MCF 10A (cell line): ENCODE measurements at regions of chr2 and their contacts with region 1.

Region 1: DNA sequence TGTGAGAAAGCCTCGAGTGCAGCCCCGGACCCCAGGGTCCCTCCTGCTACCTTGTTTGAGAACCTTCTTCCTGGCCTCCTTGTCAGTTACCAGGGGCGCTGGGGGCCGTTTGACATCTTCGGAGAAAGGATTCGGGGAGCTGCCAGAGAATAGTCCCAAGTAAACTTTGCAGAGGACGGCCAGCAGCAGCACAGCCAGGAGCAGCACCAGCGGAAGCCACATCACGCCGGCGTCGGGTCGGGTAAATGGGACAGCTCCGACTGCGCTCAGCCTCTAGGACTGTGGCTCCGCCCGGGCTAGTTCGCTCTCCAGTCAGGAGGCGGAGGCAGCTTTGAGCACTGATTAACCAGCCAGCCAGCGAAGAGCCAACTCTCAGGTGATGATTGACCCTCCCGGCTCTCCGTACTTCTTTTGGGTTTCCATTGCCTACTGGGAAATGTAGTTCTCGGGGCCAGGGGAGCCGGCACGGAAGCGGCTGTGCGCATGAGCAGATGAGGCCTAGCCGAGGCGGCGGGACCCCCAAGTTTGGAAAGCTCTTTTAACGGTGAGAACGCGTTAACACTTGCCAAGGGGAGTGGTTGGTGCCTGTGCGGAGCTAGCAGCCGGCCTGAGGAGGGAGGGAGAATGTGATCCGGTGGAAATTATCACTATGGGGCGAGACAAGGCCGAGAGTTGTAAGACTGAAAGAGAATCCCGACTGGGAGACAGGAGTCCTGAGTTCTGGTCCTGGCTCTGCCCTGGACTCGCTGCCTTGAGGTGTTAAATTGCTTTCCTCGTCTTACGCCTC is at the starts of genes ELMOD3 and RETSAT:
- DNase-seq: peak; percentile 100
- H3K4me3 Mint-ChIP-seq: peak within 1 kb of the TSS; percentile 97
- H3K27ac Mint-ChIP-seq: peak within 1 kb of the TSS; percentile 98
- H3K4me1 Mint-ChIP-seq: peaks cover 10% of the 10 kb centered on the region
- H3K27me3 Mint-ChIP-seq: no peaks in the 10 kb centered on the region
- CTCF ChIP-seq: no peak
- total RNA-seq, gene ELMOD3: 16.2 and 16.7 TPM in 2 replicates
- total RNA-seq, gene RETSAT: 59.2 and 60.4 TPM in 2 replicates

Region 2: DNA sequence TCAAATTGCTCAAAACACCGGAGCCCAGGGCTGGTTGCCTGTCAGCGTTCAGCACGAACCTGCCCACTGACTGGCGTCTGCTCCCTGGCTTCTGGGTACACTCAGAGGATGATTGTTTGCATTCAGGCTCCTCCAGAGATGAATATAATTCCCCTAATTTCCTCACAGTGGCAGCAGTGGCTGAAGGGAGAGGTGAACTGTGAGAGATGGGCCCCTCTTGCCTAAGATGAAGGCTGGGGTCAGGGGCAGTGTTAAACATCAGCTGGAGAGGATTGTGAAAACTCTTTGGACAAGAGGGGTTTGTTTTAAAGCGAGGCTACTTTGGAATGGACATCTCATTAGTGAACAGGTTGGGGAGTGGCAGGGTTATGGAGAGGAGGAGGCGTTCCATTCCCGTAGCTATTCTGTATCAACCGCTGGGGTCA is 190.3 kb before region 1 on chr2:
- CTCF ChIA-PET with region 1: no interaction called
- POLR2A ChIA-PET with region 1: no interaction called
- intact Hi-C with region 1: no loop called
- DNase-seq: no peak
- H3K4me3 Mint-ChIP-seq: no peak overlapping the region
- H3K27ac Mint-ChIP-seq: no peak overlapping the region
- H3K4me1 Mint-ChIP-seq: no peaks in the 10 kb centered on the region
- H3K27me3 Mint-ChIP-seq: no peaks in the 10 kb centered on the region
- CTCF ChIP-seq: no peak

Region 3: DNA sequence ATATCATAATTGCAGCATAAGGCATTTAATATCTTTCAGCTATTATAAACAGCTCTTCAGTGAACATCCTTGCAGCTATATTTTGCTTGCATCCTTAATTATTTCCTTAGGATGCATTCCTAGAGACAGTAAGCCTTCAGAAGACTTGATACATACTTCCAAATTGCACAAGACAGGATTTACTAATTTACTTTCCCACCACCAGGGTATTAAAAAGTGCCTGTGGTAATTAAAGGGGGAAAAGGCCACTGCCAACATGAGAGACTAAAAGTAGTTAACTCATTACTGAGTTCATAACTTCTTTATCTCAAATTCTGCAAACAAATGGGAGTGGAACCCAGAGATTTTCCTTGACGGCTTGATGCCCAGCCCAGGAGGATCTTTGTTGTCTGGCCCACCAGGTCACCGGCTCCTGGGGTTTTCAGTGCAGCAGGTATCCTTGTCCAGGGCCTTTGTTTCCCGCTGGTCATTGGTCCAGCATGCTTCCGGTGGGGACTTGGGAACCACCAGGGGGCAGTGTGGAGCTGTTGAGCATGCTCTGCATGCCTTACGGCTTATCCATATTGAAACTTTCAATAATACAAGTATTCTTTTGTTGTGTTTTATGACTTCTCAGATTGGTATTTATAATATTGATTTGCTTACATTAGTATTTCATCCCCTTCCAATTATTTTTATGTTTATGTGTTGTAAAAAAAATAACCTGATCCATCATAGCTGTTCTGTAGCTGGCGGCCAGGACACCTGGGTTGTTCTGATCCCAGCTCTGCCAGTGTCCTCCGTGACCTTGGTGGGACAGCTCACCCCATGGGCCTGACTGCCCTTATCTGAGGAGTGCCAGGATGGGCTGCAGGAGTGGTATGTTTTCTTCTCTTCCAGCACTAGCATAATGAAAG is 88.1 kb before region 1 on chr2:
- CTCF ChIA-PET with region 1: no interaction called
- POLR2A ChIA-PET with region 1: no interaction called
- intact Hi-C with region 1: no loop called
- DNase-seq: peak; percentile 74
- H3K4me3 Mint-ChIP-seq: no peak overlapping the region
- H3K27ac Mint-ChIP-seq: no peak overlapping the region
- H3K4me1 Mint-ChIP-seq: no peaks in the 10 kb centered on the region
- H3K27me3 Mint-ChIP-seq: no peaks in the 10 kb centered on the region
- CTCF ChIP-seq: peak; percentile 92

Region 4: DNA sequence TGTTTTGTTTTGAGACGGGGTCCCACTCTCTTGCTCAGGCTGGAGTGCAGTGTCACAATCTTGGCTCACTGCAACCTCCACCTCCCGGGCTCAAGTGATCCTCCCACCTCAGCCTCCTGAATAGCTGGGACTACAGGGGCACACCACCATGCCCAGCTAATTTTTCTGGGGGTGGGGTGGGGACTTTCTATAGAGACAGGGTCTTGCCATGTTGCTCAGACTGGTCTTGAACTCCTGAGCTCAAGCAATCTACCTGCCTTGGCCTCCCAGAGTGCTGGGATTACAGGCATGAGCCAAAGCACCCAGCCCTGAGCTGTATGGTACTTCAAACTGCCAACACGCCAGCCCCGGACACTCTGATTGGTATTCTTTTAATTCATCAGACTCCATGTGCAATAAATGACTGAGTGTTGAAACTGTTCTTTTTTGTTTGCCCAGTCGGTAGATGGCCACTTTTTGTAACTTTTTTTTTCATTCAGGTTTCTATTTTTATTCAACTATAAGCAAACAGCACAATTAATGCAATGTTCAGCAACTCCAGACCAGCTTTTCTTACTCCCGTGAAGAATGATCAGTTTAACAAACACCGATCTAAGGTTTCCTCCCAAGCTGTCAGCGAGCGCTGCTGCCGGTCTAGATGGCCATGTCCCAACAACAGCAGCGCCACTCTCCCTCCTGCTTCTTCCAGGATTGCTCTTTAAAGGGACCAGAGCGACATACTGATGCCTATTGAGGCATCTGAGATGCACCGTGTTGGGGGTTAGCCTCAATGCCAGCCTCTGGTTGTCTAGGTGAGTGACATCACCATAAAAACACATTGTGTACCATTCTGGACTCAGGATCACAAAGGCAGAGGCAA is 14.2 kb before region 1 on chr2:
- CTCF ChIA-PET with region 1: interaction called, 3 read pairs
- POLR2A ChIA-PET with region 1: interaction called, 27 read pairs
- intact Hi-C with region 1: no loop called
- DNase-seq: no peak
- H3K4me3 Mint-ChIP-seq: no peak overlapping the region
- H3K27ac Mint-ChIP-seq: no peak overlapping the region
- H3K4me1 Mint-ChIP-seq: peaks cover 5% of the 10 kb centered on the region
- H3K27me3 Mint-ChIP-seq: peaks cover 19% of the 10 kb centered on the region
- CTCF ChIP-seq: no peak

Region 5: GRCh38 chr2:85409845-85410583 is 55.5 kb after region 1 on chr2 and contains the start of gene CAPG:
- CTCF ChIA-PET with region 1: interaction called, 3 read pairs
- POLR2A ChIA-PET with region 1: interaction called, 40 read pairs
- intact Hi-C with region 1: loop called (anchors 5 kb)
- DNase-seq: peak; percentile 73
- H3K4me3 Mint-ChIP-seq: peak within 1 kb of the TSS; percentile 70
- H3K27ac Mint-ChIP-seq: peak within 1 kb of the TSS; percentile 83
- H3K4me1 Mint-ChIP-seq: peaks cover 34% of the 10 kb centered on the region
- H3K27me3 Mint-ChIP-seq: no peaks in the 10 kb centered on the region
- CTCF ChIP-seq: no peak
- total RNA-seq, gene CAPG: 173 and 188 TPM in 2 replicates

Region 6: GRCh38 chr2:85428343-85428881 is 73.9 kb after region 1 on chr2:
- CTCF ChIA-PET with region 1: no interaction called
- POLR2A ChIA-PET with region 1: no interaction called
- intact Hi-C with region 1: no loop called
- DNase-seq: no peak
- H3K4me3 Mint-ChIP-seq: no peak overlapping the region
- H3K27ac Mint-ChIP-seq: no peak overlapping the region
- H3K4me1 Mint-ChIP-seq: peaks cover 2% of the 10 kb centered on the region
- H3K27me3 Mint-ChIP-seq: no peaks in the 10 kb centered on the region
- CTCF ChIP-seq: no peak

Region 7: DNA sequence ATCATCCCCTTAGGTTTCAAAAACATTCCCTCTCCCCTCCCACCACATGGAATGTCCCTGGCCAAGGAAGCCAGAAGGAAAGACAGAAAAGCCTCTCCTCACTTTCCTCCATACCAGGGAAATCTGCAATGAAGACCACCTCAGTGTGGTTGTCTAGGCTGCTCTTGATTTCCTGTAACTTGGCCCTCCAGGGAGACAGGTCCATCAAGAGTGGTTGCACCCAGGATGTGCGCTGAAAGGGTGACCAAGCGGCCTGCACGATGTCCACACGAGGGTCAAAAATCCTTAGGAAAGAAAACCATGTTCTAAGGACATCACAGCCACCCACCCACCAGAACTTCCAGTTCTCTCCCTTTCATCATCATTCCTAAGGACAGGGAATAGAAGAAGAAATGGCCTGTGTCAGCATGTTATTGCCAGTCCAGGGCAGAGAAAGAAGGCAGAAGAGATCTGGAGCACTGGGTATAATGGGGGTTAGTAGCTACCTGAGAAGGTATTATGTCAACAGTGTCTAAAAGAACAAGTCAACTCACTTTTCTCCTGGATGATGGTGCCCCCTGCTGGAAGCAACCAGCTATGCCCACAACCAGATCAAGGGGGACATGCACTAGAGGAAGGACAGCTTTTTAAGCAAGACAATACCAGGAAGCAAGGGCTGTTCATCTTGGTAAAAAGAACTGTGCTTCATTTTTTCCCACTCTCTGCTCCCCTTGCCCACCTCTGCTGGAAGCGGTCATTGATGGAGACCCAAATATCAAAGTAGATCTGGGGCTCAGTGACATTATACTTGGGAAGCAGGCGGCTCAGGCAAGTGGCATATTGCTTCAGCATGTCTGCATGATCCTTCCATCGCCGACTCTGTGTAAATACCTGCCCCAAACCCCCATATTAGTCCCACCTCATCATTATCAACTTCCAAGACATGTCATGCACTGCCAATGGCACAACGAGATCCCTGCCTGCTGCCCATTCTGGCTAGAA is 197.5 kb after region 1 on chr2:
- CTCF ChIA-PET with region 1: interaction called, 5 read pairs
- POLR2A ChIA-PET with region 1: interaction called, 11 read pairs
- intact Hi-C with region 1: loop called (anchors 5 kb)
- DNase-seq: peak; percentile 88
- H3K4me3 Mint-ChIP-seq: no peak overlapping the region
- H3K27ac Mint-ChIP-seq: no peak overlapping the region
- H3K4me1 Mint-ChIP-seq: peaks cover 1% of the 10 kb centered on the region
- H3K27me3 Mint-ChIP-seq: no peaks in the 10 kb centered on the region
- CTCF ChIP-seq: peak; percentile 87

Region 8: DNA sequence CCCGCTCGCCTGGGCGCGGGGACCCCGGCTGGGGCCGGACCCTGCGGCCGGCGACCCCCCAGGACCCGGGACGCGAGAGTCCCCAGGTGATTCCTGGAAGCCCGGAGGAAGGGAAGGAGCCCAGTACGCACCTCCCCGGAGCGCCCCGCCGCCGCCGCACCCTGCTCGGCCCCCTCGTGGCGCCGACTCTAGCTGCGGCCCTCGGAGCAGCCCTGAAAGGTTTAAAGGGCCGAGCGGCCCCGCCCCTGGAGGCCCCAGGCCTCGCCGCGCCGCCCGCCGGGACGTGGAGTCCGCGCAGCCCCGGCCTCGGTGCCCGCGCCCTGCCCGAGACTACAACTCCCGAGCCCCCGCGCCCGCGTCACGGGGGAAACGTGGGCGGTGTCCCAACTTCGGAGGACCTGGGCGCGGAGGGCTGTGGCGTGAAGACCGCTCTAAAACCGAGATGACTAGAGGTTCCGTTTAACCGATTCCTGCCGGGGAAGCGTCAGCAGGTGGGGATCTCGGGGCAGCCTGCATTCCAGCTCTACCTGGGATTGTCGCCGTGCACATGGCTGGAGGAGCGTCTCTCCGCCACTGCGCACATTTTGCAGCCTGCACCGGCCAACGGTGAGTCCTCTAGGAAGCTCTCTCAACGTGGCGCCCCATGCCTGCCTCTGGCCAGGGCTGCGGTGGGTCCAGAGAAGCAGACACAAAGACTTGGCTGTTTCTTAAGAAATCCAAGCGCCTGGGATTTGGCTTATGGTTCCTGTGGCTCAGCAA is 248.2 kb after region 1 on chr2 and contains the start of gene TMEM150A:
- CTCF ChIA-PET with region 1: no interaction called
- POLR2A ChIA-PET with region 1: interaction called, 6 read pairs
- intact Hi-C with region 1: loop called (anchors 2 kb)
- DNase-seq: peak; percentile 90
- H3K4me3 Mint-ChIP-seq: peak within 1 kb of the TSS; percentile 79
- H3K27ac Mint-ChIP-seq: peak within 1 kb of the TSS; percentile 70
- H3K4me1 Mint-ChIP-seq: peaks cover 12% of the 10 kb centered on the region
- H3K27me3 Mint-ChIP-seq: no peaks in the 10 kb centered on the region
- CTCF ChIP-seq: peak; percentile 30
- total RNA-seq, gene TMEM150A: 12.5 and 14.5 TPM in 2 replicates